ENCODE measurements at regions of chr1 and their contacts with region 1.

Region 1: GRCh38 chr1:227946624-227947385 is 927 bp downstream of the WNT9A start:
- DNase-seq: peak; percentile 95
- H3K4me3 ChIP-seq: peak overlapping the region; percentile 42 to 48; a peak in 3 of 4 replicates
- H3K27ac ChIP-seq: no peak overlapping the region
- H3K4me1 ChIP-seq: peaks cover 0 to 2% of the 10 kb centered on the region in 2 experiments; a peak in 1 of 4 replicates
- H3K27me3 ChIP-seq: no peaks in the 10 kb centered on the region
- CTCF ChIP-seq: peak; percentile 69
- EP300 ChIP-seq: no peak
- RAD21 ChIP-seq: peak; percentile 85

Region 2: GRCh38 chr1:227482023-227482299 is 464.8 kb before region 1 on chr1:
- CTCF ChIA-PET with region 1: interaction called, 21 read pairs
- POLR2A ChIA-PET with region 1: no interaction called
- DNase-seq: no peak
- H3K4me3 ChIP-seq: no peak overlapping the region
- H3K27ac ChIP-seq: no peak overlapping the region
- H3K4me1 ChIP-seq: no peaks in the 10 kb centered on the region
- H3K27me3 ChIP-seq: no peaks in the 10 kb centered on the region
- CTCF ChIP-seq: no peak
- EP300 ChIP-seq: no peak
- RAD21 ChIP-seq: no peak

Region 3: GRCh38 chr1:227869851-227870305 is 76.9 kb before region 1 on chr1:
- CTCF ChIA-PET with region 1: no interaction called
- POLR2A ChIA-PET with region 1: no interaction called
- DNase-seq: no peak
- H3K4me3 ChIP-seq: no peak overlapping the region
- H3K27ac ChIP-seq: no peak overlapping the region
- H3K4me1 ChIP-seq: no peaks in the 10 kb centered on the region; a peak in 1 of 4 replicates
- H3K27me3 ChIP-seq: no peaks in the 10 kb centered on the region
- CTCF ChIP-seq: no peak
- EP300 ChIP-seq: no peak
- RAD21 ChIP-seq: no peak

Region 4: GRCh38 chr1:227987181-227987580 is 40.4 kb after region 1 on chr1:
- CTCF ChIA-PET with region 1: no interaction called
- POLR2A ChIA-PET with region 1: no interaction called
- DNase-seq: no peak
- H3K4me3 ChIP-seq: no peak overlapping the region
- H3K27ac ChIP-seq: no peak overlapping the region
- H3K4me1 ChIP-seq: no peaks in the 10 kb centered on the region
- H3K27me3 ChIP-seq: no peaks in the 10 kb centered on the region
- CTCF ChIP-seq: no peak
- EP300 ChIP-seq: no peak
- RAD21 ChIP-seq: no peak